ENCODE measurements at regions of chr11 and their contacts with region 1.

Region 1: DNA sequence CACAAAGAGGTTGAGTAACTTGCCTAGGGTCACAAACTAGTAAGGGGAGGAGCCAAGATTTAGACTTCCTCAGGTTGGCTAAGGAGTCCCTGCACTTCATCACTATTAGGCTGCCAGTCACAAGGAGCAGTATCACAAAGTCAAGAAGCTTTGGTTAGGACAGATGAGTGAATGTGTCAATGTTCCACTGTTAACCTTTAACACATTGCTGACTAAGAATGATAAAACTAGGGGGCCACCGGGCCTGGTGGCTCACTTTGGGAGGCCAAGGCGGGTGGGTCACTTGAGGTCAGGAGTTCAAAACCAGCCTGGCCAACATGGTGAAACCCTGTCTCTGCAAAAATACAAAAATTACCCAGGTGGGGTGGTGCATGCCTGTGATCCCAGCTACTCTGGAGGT is 32.0 kb downstream of the TMEM123 start:
- DNase-seq: no peak
- H3K4me3 ChIP-seq: peak overlapping the region; percentile 9
- H3K27ac ChIP-seq: peak overlapping the region; percentile 65
- H3K4me1 ChIP-seq: peaks cover 74% of the 10 kb centered on the region
- CTCF ChIP-seq: no peak

Region 2: DNA sequence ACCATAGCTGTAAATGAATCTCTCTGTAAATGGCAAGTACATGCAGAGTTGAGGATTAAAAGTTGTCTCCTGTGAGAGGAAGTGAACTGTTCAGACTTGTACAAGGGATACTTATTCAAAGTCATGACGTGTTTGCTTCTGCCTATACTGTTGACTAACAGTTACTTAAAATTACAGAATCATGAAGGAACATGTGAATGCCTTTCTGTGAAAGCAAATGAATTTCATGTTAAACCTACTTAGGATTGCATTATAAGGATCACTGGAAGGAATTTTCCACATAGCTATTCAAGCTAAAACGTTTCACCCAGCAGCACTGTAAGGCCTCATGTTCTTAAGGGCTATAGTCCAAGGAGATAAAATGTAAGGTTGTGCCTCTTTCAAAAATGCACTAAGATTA is 196.7 kb before region 1 on chr11:
- CTCF ChIA-PET with region 1: no interaction called
- POLR2A ChIA-PET with region 1: no interaction called
- intact Hi-C with region 1: no loop called
- DNase-seq: no peak
- H3K4me3 ChIP-seq: no peak overlapping the region
- H3K27ac ChIP-seq: no peak overlapping the region
- H3K4me1 ChIP-seq: no peaks in the 10 kb centered on the region
- CTCF ChIP-seq: no peak

Region 3: DNA sequence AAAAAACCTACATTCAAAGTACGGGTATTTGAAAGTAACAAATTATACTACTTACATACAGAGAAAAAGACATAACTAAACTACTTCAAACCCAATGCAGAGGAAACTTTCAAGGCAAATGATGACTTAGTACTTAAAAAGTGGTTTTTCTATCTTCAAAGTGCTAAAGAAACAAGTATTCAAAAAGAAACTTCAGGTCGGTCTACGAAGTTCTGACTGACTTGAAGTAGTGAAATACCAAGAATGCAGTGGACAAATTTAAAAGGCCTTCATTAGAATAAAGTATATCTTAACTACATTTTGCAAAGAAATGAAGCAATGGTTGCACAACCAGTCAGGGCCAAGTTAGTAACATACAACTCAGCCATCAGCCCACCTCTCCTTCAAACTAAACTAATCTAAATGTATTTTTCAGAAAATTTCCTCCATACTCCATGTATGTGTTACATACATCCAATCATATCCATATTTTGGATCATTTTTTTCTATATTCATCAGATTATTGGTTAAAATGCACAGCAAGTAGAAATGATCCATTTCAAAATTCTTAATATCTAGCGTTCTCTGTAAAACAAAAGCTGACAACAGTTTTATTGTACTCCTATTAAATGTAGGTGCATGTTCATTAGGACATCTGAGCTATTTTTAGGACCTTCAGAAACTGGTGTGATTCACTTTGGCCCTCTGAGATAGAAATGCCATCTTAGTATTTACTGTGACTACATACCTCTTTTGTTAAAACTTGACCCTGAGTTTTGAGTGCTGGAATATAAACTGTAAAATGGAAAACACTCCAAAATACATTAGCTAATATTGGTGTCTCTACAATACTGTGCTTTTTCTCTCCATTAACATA is 23.6 kb before region 1 on chr11:
- CTCF ChIA-PET with region 1: no interaction called
- POLR2A ChIA-PET with region 1: interaction called, 13 read pairs
- intact Hi-C with region 1: no loop called
- DNase-seq: no peak
- H3K4me3 ChIP-seq: no peak overlapping the region
- H3K27ac ChIP-seq: no peak overlapping the region
- H3K4me1 ChIP-seq: peaks cover 42% of the 10 kb centered on the region
- CTCF ChIP-seq: no peak

Region 4: DNA sequence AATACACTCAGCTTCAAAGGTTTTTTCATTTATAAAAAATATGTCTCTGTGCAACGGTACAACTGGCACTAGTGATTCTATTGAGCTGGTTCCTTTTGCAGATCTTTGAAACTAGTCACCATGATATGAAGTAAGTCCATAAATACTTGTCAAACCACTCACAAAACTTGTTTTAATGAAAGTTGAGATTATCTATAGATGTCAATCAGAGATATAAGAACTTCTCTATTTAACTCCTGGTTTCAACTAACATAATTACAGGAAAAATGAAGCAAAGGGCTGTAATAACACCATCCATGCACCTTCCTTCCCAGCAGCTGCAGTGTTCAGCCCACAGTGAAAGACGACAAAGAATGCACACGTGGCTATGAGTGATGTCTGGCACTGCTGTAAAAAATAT is 12.6 kb before region 1 on chr11:
- CTCF ChIA-PET with region 1: interaction called, 3 read pairs
- POLR2A ChIA-PET with region 1: interaction called, 11 read pairs
- intact Hi-C with region 1: no loop called
- DNase-seq: no peak
- H3K4me3 ChIP-seq: no peak overlapping the region
- H3K27ac ChIP-seq: no peak overlapping the region
- H3K4me1 ChIP-seq: peaks cover 24% of the 10 kb centered on the region
- CTCF ChIP-seq: no peak

Region 5: DNA sequence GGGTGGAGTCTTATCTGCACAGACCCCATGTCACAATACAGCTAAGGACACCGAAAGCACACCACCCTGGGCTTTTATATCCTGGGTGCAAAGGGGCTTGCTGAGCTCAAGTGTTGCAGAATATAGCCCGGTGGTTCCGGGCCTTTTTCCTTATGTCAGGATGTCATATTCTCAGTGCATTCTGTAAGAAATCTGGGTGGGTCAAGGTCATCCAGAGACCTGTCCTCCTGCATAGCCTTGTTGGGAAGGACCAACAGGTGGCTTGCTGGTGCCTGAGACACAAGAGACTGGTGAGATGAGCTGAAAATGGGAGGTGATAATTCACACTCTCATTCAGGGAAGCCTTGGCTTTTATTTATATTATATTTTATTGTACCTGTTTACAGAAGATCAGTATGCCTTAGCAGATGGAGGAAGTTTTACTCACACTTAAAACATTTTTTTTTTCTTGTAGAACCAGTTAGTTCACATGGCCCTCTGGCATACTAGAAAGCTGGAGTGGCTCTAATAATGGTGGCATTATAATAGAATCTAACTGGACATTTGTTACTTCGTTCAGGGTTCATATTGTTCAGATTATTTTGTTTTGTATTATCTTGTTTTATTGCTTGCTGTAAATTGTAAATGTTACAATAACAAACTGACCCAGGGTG is 46.6 kb after region 1 on chr11:
- CTCF ChIA-PET with region 1: no interaction called
- POLR2A ChIA-PET with region 1: interaction called, 13 read pairs
- intact Hi-C with region 1: no loop called
- DNase-seq: no peak
- H3K4me3 ChIP-seq: no peak overlapping the region
- H3K27ac ChIP-seq: no peak overlapping the region
- H3K4me1 ChIP-seq: peaks cover 74% of the 10 kb centered on the region
- CTCF ChIP-seq: no peak

Region 6: GRCh38 chr11:102476812-102477211 is 56.3 kb after region 1 on chr11:
- CTCF ChIA-PET with region 1: interaction called, 3 read pairs
- POLR2A ChIA-PET with region 1: interaction called, 10 read pairs
- intact Hi-C with region 1: no loop called
- DNase-seq: peak; percentile 79
- H3K4me3 ChIP-seq: no peak overlapping the region
- H3K27ac ChIP-seq: peak overlapping the region; percentile 81
- H3K4me1 ChIP-seq: peaks cover 60% of the 10 kb centered on the region
- CTCF ChIP-seq: no peak

Region 7: DNA sequence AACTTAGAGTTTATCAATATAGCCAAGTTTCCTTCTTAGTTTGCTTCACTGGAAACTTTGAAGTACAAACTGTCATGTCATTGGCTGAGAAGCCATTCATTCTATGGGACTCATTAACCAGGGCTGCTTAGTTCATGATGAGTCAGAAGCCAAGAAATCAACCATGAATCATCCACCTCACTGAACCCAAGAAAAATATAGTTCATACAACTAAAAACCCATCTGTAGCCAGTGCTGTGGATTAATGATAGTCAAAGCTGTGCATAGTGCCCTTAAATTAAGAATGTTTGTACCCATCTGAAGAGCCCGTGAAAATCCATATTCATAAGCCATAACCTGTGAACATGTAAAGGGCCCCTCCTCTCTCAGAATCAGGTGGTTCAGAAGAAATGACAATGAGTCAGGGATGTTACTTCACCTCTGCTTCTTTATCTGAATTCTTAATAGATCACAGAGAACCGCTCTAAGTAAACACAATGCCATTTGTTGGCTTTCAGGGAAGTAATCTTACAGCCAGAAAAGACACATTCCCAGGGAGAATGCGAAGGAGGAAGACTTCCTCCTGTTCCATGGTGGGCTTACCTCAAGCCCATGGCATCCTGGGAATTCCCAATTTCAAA is 179.2 kb after region 1 on chr11:
- CTCF ChIA-PET with region 1: no interaction called
- POLR2A ChIA-PET with region 1: no interaction called
- intact Hi-C with region 1: no loop called
- DNase-seq: no peak
- H3K4me3 ChIP-seq: no peak overlapping the region
- H3K27ac ChIP-seq: no peak overlapping the region
- H3K4me1 ChIP-seq: no peaks in the 10 kb centered on the region
- CTCF ChIP-seq: no peak